Breast epithelium (tissue), 4 donors: ENCODE measurements at regions of chr2 and their contacts with region 1.

Region 1: GRCh38 chr2:39370101-39370500 is 67.0 kb downstream of the MAP4K3 start:
- DNase-seq: no peak
- H3K4me3 ChIP-seq: no peak overlapping the region
- H3K27ac ChIP-seq: no peak overlapping the region
- H3K4me1 ChIP-seq: no peaks in the 10 kb centered on the region
- H3K27me3 ChIP-seq: no peaks in the 10 kb centered on the region
- CTCF ChIP-seq: no peak
- POLR2A ChIP-seq: no peak

Region 2: GRCh38 chr2:40358783-40359182 is 988.7 kb after region 1 on chr2:
- intact Hi-C with region 1: loop called (anchors 5 kb)
- DNase-seq: no peak
- H3K4me3 ChIP-seq: no peak overlapping the region
- H3K27ac ChIP-seq: no peak overlapping the region
- H3K4me1 ChIP-seq: no peaks in the 10 kb centered on the region
- H3K27me3 ChIP-seq: no peaks in the 10 kb centered on the region
- CTCF ChIP-seq: no peak
- POLR2A ChIP-seq: no peak